Caco-2 (cell line): ENCODE measurements at regions of chr1 and their contacts with region 1.

Region 1: DNA sequence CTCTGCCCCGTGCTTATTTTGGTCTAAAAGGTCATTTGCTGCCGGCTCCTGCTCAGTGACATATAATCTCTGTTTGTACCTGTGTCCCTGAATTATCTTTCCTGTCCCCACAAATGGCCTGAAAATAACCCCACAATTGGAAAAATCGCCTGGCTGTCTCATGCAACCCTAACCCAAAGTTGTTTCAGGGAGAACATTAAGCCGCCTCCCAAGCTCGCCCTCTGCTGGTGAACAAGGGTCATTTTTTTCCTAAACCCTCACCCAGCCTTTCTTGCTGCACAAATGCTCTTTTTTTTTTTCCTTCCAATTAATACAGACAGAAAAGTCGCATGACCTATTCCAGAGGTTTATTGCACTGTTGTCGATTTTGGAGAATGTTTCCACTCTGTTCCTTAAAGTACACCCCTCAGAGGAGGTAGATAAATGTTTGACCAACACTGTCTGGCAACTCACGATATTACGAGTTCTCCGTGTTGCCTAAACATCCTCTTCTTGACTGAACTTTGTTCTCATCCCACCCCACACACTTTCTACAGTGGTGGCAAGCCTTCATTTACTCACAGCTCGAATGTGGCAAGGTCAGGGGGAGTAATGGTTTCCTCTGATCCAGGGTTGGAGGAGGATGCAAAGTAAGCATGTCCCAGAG is 148.7 kb downstream of the ZZZ3 start:
- DNase-seq: peak; percentile 39 to 48
- H3K4me3 ChIP-seq: no peak overlapping the region
- H3K4me3 Mint-ChIP-seq: no peak overlapping the region
- H3K27ac Mint-ChIP-seq: peak overlapping the region; percentile 51
- H3K4me1 ChIP-seq: no peaks in the 10 kb centered on the region
- H3K4me1 Mint-ChIP-seq: no peaks in the 10 kb centered on the region
- H3K27me3 ChIP-seq: no peaks in the 10 kb centered on the region
- H3K27me3 Mint-ChIP-seq: no peaks in the 10 kb centered on the region
- CTCF ChIP-seq: peak; percentile 46 to 55

Region 2: GRCh38 chr1:77143529-77144121 is 390.2 kb before region 1 on chr1:
- CTCF ChIA-PET with region 1: no interaction called
- POLR2A ChIA-PET with region 1: no interaction called
- intact Hi-C with region 1: loop called (anchors 1 kb)
- DNase-seq: no peak
- H3K4me3 ChIP-seq: no peak overlapping the region
- H3K4me3 Mint-ChIP-seq: no peak overlapping the region
- H3K27ac Mint-ChIP-seq: no peak overlapping the region
- H3K4me1 ChIP-seq: no peaks in the 10 kb centered on the region
- H3K4me1 Mint-ChIP-seq: no peaks in the 10 kb centered on the region
- H3K27me3 ChIP-seq: no peaks in the 10 kb centered on the region
- H3K27me3 Mint-ChIP-seq: no peaks in the 10 kb centered on the region
- CTCF ChIP-seq: peak in 1 of 2 experiments; percentile 21

Region 3: GRCh38 chr1:77446841-77447555 is 86.8 kb before region 1 on chr1:
- CTCF ChIA-PET with region 1: no interaction called
- POLR2A ChIA-PET with region 1: no interaction called
- intact Hi-C with region 1: loop called (anchors 10 kb)
- DNase-seq: no peak
- H3K4me3 ChIP-seq: no peak overlapping the region
- H3K4me3 Mint-ChIP-seq: no peak overlapping the region
- H3K27ac Mint-ChIP-seq: no peak overlapping the region
- H3K4me1 ChIP-seq: peaks cover 20% of the 10 kb centered on the region
- H3K4me1 Mint-ChIP-seq: no peaks in the 10 kb centered on the region
- H3K27me3 ChIP-seq: no peaks in the 10 kb centered on the region
- H3K27me3 Mint-ChIP-seq: no peaks in the 10 kb centered on the region
- CTCF ChIP-seq: no peak

Region 4: DNA sequence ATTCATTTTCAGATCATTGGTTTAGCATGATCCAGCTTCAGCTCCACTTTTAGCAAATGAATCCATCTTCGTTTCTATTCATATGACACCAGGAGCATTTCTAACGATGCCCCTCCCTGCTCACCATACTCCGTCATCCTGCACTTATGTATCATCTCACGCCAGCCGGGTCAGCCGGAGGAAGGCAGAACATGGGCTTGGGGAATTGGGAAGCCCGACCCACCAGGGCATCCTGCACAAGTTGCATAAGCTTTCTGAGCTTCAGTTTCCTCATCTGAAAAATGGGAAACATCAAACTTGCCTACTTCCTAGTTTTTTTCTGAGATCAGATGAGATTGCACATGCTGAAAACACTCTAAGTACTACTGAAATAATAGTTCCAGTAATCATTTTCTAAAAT is 57.3 kb before region 1 on chr1:
- CTCF ChIA-PET with region 1: interaction called, 13 read pairs
- POLR2A ChIA-PET with region 1: no interaction called
- intact Hi-C with region 1: no loop called
- DNase-seq: no peak
- H3K4me3 ChIP-seq: no peak overlapping the region
- H3K4me3 Mint-ChIP-seq: no peak overlapping the region
- H3K27ac Mint-ChIP-seq: no peak overlapping the region
- H3K4me1 ChIP-seq: no peaks in the 10 kb centered on the region
- H3K4me1 Mint-ChIP-seq: no peaks in the 10 kb centered on the region
- H3K27me3 ChIP-seq: no peaks in the 10 kb centered on the region
- H3K27me3 Mint-ChIP-seq: peaks cover 5% of the 10 kb centered on the region
- CTCF ChIP-seq: no peak

Region 5: DNA sequence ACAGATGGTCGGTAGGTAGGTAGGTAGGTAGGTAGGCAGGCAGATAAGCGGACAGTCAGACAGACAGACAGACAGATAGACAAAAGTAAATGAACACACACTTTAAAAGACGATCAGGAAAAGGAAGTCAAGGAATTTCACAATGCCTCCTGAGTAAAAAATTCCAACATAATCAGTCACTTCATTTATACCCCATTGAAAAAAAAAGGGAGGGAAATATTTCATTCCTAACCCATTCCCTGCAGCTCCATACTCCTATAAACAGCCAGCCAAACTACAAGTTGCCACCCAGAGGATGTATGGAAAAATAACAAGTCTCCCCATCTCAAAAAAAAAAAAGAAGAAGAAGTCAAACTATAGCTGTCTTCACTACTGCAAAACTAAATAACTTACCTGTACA is 105.3 kb after region 1 on chr1:
- CTCF ChIA-PET with region 1: no interaction called
- POLR2A ChIA-PET with region 1: no interaction called
- intact Hi-C with region 1: no loop called
- DNase-seq: no peak
- H3K4me3 ChIP-seq: no peak overlapping the region
- H3K4me3 Mint-ChIP-seq: no peak overlapping the region
- H3K27ac Mint-ChIP-seq: no peak overlapping the region
- H3K4me1 ChIP-seq: no peaks in the 10 kb centered on the region
- H3K4me1 Mint-ChIP-seq: peaks cover 7% of the 10 kb centered on the region
- H3K27me3 ChIP-seq: no peaks in the 10 kb centered on the region
- H3K27me3 Mint-ChIP-seq: no peaks in the 10 kb centered on the region
- CTCF ChIP-seq: no peak

Region 6: DNA sequence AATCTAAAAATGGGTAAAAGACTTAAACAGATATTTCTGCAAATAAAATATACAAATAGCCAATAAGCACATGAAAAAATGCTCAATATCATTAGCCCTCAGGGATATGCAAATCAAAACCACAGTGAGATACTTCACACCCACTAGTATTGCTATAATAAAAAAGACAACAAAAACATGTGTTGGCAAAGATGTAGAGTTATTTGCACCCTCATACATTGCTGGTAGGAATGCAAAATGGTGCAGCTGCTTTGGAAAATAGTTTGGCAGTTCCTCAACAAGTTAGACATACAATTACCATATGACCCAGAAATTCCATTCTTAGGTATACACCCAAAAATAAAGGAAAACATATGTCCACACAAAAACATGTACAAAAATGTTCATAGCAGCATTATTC is 118.5 kb after region 1 on chr1:
- CTCF ChIA-PET with region 1: no interaction called
- POLR2A ChIA-PET with region 1: no interaction called
- intact Hi-C with region 1: no loop called
- DNase-seq: no peak
- H3K4me3 ChIP-seq: no peak overlapping the region
- H3K4me3 Mint-ChIP-seq: no peak overlapping the region
- H3K27ac Mint-ChIP-seq: no peak overlapping the region
- H3K4me1 ChIP-seq: no peaks in the 10 kb centered on the region
- H3K4me1 Mint-ChIP-seq: no peaks in the 10 kb centered on the region
- H3K27me3 ChIP-seq: no peaks in the 10 kb centered on the region
- H3K27me3 Mint-ChIP-seq: no peaks in the 10 kb centered on the region
- CTCF ChIP-seq: no peak